GM12878 (cell line): ENCODE measurements at regions of chr4 and their contacts with region 1.

Region 1: DNA sequence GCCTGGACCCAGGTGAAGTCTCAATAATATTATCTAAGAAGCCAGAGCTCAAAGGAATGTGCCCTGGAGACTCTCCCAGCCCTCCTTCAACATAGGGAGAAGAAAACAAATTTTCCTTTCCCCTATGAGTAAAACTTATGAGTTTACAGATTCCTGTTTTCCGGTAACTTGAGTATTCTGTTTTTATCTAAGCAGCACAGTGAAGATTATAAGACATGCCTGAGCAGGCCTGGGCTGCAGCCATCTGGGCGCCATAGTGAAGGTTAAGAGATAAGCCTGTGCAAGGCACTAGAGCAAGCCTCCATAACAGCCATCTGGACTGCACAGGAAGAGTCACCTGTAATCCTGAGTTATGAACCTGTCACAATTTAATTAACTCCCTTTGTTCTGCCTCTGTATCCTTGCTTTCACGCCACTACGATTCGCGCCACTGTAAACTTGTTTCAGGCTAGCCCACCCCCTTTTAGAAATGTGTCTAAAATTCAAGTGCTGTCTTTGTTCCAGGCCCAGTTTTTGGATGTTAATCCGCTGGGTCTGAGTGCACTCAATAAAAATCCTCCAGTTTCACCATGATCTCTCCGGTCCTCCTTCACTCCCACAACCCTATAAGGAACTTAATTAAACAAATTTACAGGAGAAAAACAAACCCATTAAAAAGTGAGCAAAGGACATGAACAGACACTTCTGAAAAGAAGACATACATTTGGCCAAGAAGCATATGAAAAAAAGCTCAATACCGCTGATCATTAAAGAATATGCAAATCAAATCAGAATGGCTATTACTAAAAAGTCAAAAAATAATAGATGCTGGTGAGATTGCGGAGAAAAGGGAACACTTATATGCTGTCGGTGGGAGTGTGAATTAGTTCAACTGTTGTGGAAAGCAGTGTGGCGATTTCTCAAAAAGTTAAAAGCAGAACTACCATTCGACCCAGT is 189.5 kb downstream of the APBB2 start:
- DNase-seq: no peak
- ATAC-seq: no peak
- H3K4me3 ChIP-seq: no peak overlapping the region
- H3K27ac ChIP-seq: no peak overlapping the region
- H3K4me1 ChIP-seq: no peaks in the 10 kb centered on the region
- H3K27me3 ChIP-seq: no peaks in the 10 kb centered on the region
- CTCF ChIP-seq: no peak
- EP300 ChIP-seq: no peak
- POLR2A ChIP-seq: no peak
- RAD21 ChIP-seq: no peak

Region 2: DNA sequence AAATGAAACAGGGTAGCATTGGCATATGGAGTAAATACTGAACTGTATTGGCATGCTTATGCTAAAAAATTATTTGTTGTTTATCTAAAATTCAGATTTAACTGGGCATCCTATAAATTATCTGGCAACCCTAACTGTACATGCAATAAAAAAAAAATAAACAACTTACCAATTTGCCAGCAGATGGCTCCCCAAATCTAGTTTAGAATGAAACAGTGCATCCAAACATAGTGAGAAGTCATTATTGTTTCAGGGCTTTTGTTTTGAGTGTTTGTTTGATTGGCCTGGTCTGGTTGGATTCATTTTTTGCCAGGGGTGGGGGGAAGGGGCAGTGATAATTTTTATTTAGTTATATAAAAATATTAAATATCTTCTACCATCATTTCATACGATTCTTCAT is 287.9 kb before region 1 on chr4:
- CTCF ChIA-PET with region 1: no interaction called
- POLR2A ChIA-PET with region 1: no interaction called
- RAD21 ChIA-PET with region 1: no interaction called
- SMC1A ChIA-PET with region 1: no interaction called
- in situ Hi-C with region 1: no loop called
- intact Hi-C with region 1: no loop called
- DNase-seq: no peak
- ATAC-seq: peak; percentile 84
- H3K4me3 ChIP-seq: no peak overlapping the region
- H3K27ac ChIP-seq: no peak overlapping the region
- H3K4me1 ChIP-seq: no peaks in the 10 kb centered on the region
- H3K27me3 ChIP-seq: no peaks in the 10 kb centered on the region
- CTCF ChIP-seq: peak; percentile 43 to 68 (median 47); a peak in 5 of 6 replicates
- EP300 ChIP-seq: no peak
- POLR2A ChIP-seq: no peak
- RAD21 ChIP-seq: peak; percentile 94

Region 3: DNA sequence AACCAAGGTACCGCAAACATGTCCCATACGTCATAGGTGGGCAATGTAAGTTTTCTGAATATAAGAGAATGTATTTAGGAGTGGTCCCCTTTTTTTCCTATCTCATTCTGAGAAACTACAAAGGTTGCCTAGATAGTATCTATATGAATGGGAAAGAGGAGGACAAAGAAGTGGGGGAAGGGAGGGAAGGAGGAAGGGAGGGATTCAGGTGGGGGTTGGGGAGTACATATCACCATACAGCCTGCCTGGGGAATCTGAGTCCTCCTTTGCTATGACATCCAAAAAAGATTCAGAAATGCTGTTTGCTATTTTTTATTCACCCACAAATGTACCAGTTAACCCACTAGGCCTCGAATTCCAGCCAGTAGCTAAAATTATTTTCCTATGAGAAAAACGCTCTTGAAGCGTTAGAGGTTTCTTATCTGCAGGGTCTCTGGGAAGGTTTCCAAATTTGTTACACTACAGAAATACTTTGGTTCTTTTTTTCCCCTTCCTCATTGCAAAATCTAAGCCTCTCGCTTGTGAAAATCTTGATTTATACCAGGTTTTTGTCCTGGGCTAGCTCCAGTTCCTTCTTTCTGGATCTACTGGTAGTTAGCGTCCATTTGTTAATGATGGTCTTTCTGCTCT is 62.2 kb before region 1 on chr4:
- CTCF ChIA-PET with region 1: no interaction called
- POLR2A ChIA-PET with region 1: no interaction called
- RAD21 ChIA-PET with region 1: no interaction called
- SMC1A ChIA-PET with region 1: no interaction called
- in situ Hi-C with region 1: loop called (anchors 10 kb)
- intact Hi-C with region 1: no loop called
- DNase-seq: no peak
- ATAC-seq: no peak
- H3K4me3 ChIP-seq: no peak overlapping the region
- H3K27ac ChIP-seq: no peak overlapping the region
- H3K4me1 ChIP-seq: no peaks in the 10 kb centered on the region
- H3K27me3 ChIP-seq: no peaks in the 10 kb centered on the region
- CTCF ChIP-seq: no peak
- EP300 ChIP-seq: no peak
- POLR2A ChIP-seq: no peak
- RAD21 ChIP-seq: no peak